Ascending aorta (tissue), 2 donors: ENCODE measurements at regions of chr3 and their contacts with region 1.

Region 1: GRCh38 chr3:71064288-71064955 is 519.1 kb downstream of the FOXP1 start:
- DNase-seq: peak in 1 of 2 donors; percentile 76
- H3K4me3 ChIP-seq: peak overlapping the region; percentile 66 to 80
- H3K27ac ChIP-seq: peak overlapping the region; percentile 95 to 98
- H3K4me1 ChIP-seq: peaks cover 3 to 41% of the 10 kb centered on the region in 2 donors
- H3K27me3 ChIP-seq: no peaks in the 10 kb centered on the region
- CTCF ChIP-seq: peak in 1 of 3 experiments; percentile 51

Region 2: DNA sequence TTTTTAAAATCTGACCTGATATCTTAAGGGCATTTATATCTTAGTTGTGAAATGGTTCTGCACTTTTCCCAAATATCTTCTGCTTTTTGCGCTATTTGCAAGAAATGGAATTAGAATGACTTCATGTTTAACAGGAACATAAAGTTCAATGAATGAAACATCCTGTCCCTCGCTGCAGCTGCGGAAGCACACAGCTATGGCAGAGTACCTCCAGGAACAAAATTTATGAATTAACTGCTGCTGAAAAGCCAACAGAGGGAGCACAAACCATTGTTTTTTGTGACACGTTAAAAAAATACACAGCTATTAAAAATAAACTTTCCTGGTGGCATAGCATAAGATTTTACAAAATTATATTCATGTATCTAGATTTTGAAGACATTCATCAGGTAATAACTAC is 347.6 kb before region 1 on chr3:
- intact Hi-C with region 1: loop called (anchors 5 kb)
- DNase-seq: no peak
- H3K4me3 ChIP-seq: no peak overlapping the region
- H3K27ac ChIP-seq: no peak overlapping the region
- H3K4me1 ChIP-seq: peaks cover 3 to 7% of the 10 kb centered on the region in 2 donors
- H3K27me3 ChIP-seq: no peaks in the 10 kb centered on the region
- CTCF ChIP-seq: peak; percentile 30 to 65 (median 52)

Region 3: DNA sequence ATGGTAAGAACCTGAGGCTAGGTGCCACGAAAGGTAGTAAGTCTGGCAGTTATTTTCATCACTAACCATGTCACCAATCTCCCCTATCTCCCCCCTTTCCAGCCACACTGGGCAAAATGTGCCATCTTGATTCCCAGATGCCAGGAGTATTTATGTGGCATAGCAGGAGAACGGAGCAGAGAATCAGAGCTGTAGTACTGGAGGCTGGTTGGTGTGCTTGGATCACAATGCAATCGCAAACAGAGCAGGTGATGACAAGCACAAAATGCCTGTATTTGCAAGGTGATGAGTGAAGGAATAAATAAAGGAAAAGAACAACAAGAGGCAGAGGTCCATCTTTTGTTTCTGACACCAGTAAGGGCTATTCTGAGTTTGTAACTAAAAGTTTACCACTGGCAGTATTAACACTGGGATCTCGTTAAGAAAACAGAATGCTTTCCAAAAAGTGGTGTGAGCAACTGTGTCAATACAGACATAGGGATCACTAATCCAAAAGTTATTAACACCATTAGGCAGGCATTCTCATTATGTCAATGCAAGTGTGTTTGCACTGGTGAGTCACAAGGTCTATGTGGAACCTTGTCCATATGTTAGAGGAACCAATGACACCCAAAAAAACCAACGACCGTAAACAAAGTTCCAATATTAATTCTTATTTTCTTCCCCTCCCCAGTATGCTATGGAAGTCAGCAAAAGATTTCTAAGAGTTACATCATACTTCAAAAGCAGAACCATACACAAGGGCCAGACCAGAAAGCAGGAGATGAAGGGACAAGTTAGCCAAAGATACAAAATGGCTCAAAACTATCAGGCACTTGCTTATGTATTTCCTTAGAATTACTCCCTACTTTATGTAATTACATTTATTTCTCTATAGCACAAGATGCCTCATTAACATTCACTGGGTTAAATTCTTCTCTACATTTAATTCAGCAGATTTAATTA is 37.5 kb before region 1 on chr3:
- intact Hi-C with region 1: loop called (anchors 5 kb)
- DNase-seq: no peak
- H3K4me3 ChIP-seq: no peak overlapping the region
- H3K27ac ChIP-seq: peak overlapping the region; percentile 53 to 54
- H3K4me1 ChIP-seq: peaks cover 3 to 34% of the 10 kb centered on the region in 2 donors
- H3K27me3 ChIP-seq: no peaks in the 10 kb centered on the region
- CTCF ChIP-seq: no peak

Region 4: GRCh38 chr3:71101014-71101413 is 36.6 kb after region 1 on chr3:
- intact Hi-C with region 1: loop called (anchors 2 kb)
- DNase-seq: no peak
- H3K4me3 ChIP-seq: no peak overlapping the region
- H3K27ac ChIP-seq: peak overlapping the region; percentile 82 to 83
- H3K4me1 ChIP-seq: peaks cover 19 to 63% of the 10 kb centered on the region in 2 donors
- H3K27me3 ChIP-seq: no peaks in the 10 kb centered on the region
- CTCF ChIP-seq: no peak

Region 5: GRCh38 chr3:71168880-71169411 is 104.5 kb after region 1 on chr3:
- intact Hi-C with region 1: loop called (anchors 1 kb)
- DNase-seq: no peak
- H3K4me3 ChIP-seq: peak overlapping the region in 1 of 2 donors; percentile 46
- H3K27ac ChIP-seq: peak overlapping the region; percentile 70 to 87
- H3K4me1 ChIP-seq: peaks cover 9 to 56% of the 10 kb centered on the region in 2 donors
- H3K27me3 ChIP-seq: no peaks in the 10 kb centered on the region
- CTCF ChIP-seq: no peak

Region 6: DNA sequence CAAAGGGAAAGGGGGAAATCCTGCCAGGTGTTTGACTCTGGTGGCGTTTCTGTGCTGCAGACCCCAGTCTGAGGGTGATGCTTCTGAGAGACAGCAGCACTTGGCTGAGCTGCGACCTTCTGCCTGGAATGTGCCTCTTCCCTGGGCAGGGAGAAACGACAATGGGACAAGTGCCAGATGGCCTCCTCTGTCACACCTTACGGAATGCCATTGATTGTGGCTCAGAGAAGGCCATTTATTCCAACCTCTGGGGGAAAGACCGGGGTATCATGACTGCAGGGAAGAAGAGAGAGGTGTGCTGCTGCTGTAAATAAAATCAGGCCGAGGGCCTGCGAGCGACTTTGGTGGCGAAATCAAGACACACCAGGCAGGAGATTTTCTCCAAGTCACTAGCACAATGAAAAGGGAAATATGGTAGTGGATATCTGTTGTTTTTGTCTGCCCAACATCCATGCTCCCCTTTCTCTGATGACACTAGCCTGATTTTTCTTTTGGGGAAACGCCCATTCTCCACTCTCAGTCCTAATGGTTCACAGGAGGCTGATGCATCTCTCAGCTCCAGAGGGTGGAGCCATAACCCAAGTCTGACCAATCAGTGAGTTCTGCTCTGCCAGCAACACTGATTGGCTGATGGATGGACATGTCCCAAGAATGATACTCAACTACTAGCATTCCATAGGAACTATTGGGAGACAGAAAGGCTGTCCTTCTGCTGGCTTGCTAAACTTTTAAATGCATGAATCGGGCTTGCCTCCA is 183.0 kb after region 1 on chr3:
- intact Hi-C with region 1: loop called (anchors 5 kb)
- DNase-seq: peak in 1 of 2 donors; percentile 58
- H3K4me3 ChIP-seq: no peak overlapping the region
- H3K27ac ChIP-seq: peak overlapping the region; percentile 69 to 86
- H3K4me1 ChIP-seq: peaks cover 0 to 21% of the 10 kb centered on the region in 2 donors
- H3K27me3 ChIP-seq: no peaks in the 10 kb centered on the region
- CTCF ChIP-seq: no peak